CD4-positive, alpha-beta memory T cell (primary cell): ENCODE measurements at regions of chr3 and their contacts with region 1.

Region 1: DNA sequence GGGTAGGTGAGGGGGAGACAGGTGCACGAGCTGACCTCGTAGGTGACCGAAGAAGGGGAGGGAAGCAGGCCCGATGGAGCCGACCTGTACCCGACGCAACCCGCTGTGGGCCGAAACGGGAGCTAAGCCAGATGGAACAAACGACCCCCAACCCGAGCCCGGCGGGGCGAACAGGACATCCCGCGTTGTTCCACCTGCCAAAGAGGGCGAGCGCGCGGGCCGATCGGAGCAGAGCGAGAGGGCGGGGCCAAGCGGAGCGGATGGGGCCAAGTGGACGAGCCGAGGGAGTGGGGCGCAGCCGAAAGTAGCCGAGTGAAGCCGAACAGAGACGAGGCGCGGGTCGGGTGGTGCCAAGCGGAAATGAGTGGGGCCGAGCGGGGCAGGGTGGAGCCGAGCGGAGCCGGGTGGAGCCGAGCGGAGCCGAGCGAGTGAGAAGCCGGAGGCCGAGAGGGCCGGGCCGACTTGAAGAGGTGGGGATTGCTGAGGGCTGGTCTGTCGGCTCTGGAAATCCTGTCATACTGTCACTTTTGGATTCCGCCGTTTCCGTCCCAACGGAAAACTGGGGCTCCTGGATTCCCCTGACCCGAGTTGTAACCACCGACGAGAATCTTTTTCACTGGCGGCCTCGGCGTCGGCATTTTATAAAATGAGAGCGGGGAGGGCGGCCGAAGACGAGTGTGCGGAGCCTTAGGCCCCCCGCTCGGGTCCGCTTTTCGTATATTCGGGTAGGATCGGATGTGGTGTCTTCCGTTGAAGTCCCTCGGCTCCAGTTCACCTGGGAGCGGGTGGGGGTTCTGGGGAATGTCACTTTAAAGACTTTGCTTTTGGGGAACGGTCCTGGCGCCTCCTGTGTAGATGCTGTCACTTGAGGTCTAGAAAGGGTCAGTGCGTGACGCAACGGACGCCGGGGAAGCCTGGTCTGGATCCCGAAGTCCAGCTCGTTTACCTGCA is 15.6 kb upstream of the WNT7A start:
- DNase-seq: peak; percentile 93 to 95 (median 93)
- H3K4me3 ChIP-seq: peak overlapping the region; percentile 58 to 72
- H3K4me3 Mint-ChIP-seq: peak overlapping the region; percentile 78 to 94 (median 90)
- H3K27ac ChIP-seq: peak overlapping the region; percentile 73
- H3K27ac Mint-ChIP-seq: peak overlapping the region; percentile 64 to 96 (median 93)
- H3K4me1 ChIP-seq: peaks cover 40% of the 10 kb centered on the region
- H3K4me1 Mint-ChIP-seq: peaks cover 14 to 47% (median 28%) of the 10 kb centered on the region in 4 donors
- H3K27me3 ChIP-seq: no peaks in the 10 kb centered on the region
- H3K27me3 Mint-ChIP-seq: no peaks in the 10 kb centered on the region

Region 2: DNA sequence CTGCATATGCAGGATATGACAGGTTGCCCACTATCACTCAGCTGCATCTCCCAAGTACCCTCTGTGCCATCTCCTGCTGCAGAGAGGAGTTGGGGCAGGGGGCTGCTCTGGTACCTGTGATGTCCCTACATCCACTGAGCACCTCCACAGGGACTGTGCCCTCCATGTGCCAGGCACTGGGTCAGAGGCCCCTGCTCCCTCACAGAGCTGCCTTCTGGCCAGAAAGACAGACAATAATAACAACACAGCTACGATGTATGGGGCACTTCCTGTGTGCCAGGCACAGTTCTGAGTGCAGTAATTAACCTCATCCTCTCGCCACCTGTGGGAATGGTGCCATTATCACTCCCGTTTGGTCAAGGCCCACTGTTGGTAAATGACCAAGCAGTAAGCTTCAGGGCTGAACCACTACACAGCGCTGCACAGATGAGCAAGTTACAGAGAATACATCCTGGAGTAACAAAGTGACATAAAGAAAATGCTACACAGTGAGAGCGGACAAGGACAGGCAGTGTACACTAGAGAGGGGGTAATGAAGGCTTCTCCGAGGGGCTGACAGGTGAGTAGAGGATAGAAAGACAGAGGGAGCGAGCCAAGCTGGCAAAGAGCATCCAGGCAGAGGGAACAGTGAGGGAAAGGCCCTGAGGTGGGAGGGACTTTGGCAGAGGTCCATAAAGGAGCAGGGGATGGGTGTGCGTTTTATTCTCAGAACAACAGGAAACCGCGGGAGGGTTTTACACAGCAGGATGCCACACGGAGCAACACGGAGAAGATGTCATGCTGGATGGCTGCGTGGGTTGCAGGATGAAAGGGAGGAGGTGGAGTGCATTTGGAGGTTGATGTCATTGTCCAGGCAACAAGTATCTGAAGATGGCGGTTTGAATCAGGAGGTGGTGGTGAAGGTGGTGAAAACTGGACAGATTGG is 29.1 kb before region 1 on chr3:
- CTCF ChIA-PET with region 1: interaction called, 5 read pairs
- POLR2A ChIA-PET with region 1: interaction called, 34 read pairs
- intact Hi-C with region 1: no loop called
- DNase-seq: peak; percentile 80 to 87 (median 84)
- H3K4me3 ChIP-seq: peak overlapping the region in 1 of 2 donors; percentile 36
- H3K4me3 Mint-ChIP-seq: peak overlapping the region; percentile 72 to 84 (median 79)
- H3K27ac ChIP-seq: peak overlapping the region; percentile 64
- H3K27ac Mint-ChIP-seq: peak overlapping the region; percentile 83 to 100 (median 98)
- H3K4me1 ChIP-seq: peaks cover 72% of the 10 kb centered on the region
- H3K4me1 Mint-ChIP-seq: peaks cover 48 to 75% (median 63%) of the 10 kb centered on the region in 4 donors
- H3K27me3 ChIP-seq: no peaks in the 10 kb centered on the region
- H3K27me3 Mint-ChIP-seq: no peaks in the 10 kb centered on the region

Region 3: GRCh38 chr3:14144423-14145075 is 249.1 kb after region 1 on chr3:
- CTCF ChIA-PET with region 1: interaction called, 7 read pairs
- POLR2A ChIA-PET with region 1: interaction called, 11 read pairs
- intact Hi-C with region 1: loop called (anchors 5 kb)
- DNase-seq: peak; percentile 87 to 96 (median 93)
- H3K4me3 ChIP-seq: peak overlapping the region in 1 of 2 donors; percentile 29
- H3K4me3 Mint-ChIP-seq: peak overlapping the region; percentile 73 to 89 (median 82)
- H3K27ac ChIP-seq: peak overlapping the region; percentile 95
- H3K27ac Mint-ChIP-seq: peak overlapping the region; percentile 95 to 100 (median 100)
- H3K4me1 ChIP-seq: peaks cover 67% of the 10 kb centered on the region
- H3K4me1 Mint-ChIP-seq: peaks cover 45 to 72% (median 60%) of the 10 kb centered on the region in 4 donors
- H3K27me3 ChIP-seq: no peaks in the 10 kb centered on the region
- H3K27me3 Mint-ChIP-seq: no peaks in the 10 kb centered on the region

Region 4: GRCh38 chr3:14261229-14261628 is 365.8 kb after region 1 on chr3:
- CTCF ChIA-PET with region 1: interaction called, 10 read pairs
- POLR2A ChIA-PET with region 1: no interaction called
- intact Hi-C with region 1: loop called (anchors 1 kb)
- DNase-seq: peak; percentile 54 to 65 (median 64)
- H3K4me3 ChIP-seq: no peak overlapping the region
- H3K4me3 Mint-ChIP-seq: no peak overlapping the region
- H3K27ac ChIP-seq: no peak overlapping the region
- H3K27ac Mint-ChIP-seq: no peak overlapping the region
- H3K4me1 ChIP-seq: no peaks in the 10 kb centered on the region
- H3K4me1 Mint-ChIP-seq: peaks cover 0 to 2% (median under 1%) of the 10 kb centered on the region in 4 donors
- H3K27me3 ChIP-seq: no peaks in the 10 kb centered on the region
- H3K27me3 Mint-ChIP-seq: peaks cover 0 to 6% of the 10 kb centered on the region in 2 donors

Region 5: DNA sequence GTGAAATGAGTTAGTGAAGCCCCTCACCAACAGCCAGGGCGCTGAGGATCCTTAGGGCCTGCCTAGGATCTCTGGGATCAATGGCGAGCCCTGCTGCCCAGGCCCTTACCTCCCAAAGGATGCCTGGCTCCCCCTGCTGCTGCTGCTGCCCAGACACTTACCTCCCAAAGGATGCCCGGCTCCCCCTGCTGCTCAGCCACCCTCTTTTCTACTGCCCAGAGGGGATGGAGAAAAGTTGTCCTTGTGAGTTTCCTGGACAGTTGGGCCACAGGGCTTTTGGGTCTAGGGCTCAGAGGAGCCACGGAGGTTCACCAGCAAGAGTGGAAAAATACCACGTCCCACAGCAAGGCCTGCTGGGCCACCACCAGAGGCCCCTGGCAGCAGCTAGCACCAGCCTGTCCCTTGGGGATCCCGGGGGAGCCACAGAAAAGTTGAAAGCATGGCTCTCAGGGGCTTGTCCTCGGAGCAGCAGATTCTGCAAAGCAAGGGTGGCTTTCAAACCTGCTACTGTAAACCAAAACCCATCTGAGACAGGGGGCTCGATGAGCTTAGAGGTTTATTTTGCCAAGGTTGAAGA is 566.4 kb after region 1 on chr3:
- CTCF ChIA-PET with region 1: interaction called, 24 read pairs
- POLR2A ChIA-PET with region 1: interaction called, 3 read pairs
- intact Hi-C with region 1: loop called (anchors 1 kb)
- DNase-seq: peak in 4 of 5 donors; percentile 30 to 38 (median 32)
- H3K4me3 ChIP-seq: no peak overlapping the region
- H3K4me3 Mint-ChIP-seq: no peak overlapping the region
- H3K27ac ChIP-seq: no peak overlapping the region
- H3K27ac Mint-ChIP-seq: peak overlapping the region in 3 of 7 donors; percentile 23 to 73 (median 41)
- H3K4me1 ChIP-seq: no peaks in the 10 kb centered on the region
- H3K4me1 Mint-ChIP-seq: peaks cover 0 to 5% (median 3%) of the 10 kb centered on the region in 4 donors
- H3K27me3 ChIP-seq: no peaks in the 10 kb centered on the region
- H3K27me3 Mint-ChIP-seq: no peaks in the 10 kb centered on the region

Region 6: DNA sequence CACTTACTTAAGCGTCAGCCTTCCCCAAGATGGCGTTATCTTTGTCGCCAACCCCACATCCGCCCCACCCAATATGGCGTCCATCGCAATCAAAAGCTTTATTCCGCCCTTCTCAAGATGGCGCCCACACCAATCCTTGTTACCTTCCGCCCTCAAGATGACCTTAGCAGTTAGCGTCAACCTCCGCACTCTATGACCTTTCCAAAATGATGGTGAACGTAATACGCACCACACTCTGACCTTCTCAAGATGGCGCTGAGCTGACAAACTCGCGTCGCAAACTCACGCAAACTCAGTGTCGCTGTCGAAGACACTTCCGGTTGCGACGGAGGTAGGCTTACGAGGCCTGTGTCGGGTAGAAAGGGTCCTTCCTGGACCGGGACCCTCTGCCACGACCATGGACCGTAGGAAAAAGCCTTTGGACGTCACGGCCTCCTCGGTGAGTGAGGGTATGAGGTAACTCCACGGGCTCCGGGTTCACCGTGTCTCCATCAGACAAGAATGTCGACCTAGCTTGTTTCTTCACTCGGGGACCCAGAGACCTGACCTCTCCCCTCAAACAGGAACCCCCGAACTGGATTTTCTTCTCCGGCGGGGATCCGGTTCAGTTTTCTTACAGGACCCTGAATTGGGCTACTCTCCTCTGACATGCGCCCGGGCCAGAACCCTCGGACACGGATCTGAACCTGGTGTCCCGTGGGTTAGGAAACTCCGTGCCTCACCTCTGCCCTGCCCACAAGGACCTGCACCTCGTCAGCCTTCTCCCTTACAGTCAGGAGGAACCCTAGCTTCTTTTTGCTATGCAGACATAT is 756.2 kb after region 1 on chr3 and contains the start of gene CCDC174:
- CTCF ChIA-PET with region 1: no interaction called
- POLR2A ChIA-PET with region 1: interaction called, 7 read pairs
- intact Hi-C with region 1: loop called (anchors 1 kb)
- DNase-seq: peak; percentile 95 to 98 (median 97)
- H3K4me3 ChIP-seq: peak within 1 kb of the TSS; percentile 67 to 98
- H3K4me3 Mint-ChIP-seq: peak within 1 kb of the TSS; percentile 84 to 99 (median 94)
- H3K27ac ChIP-seq: peak within 1 kb of the TSS; percentile 98
- H3K27ac Mint-ChIP-seq: peak within 1 kb of the TSS; percentile 91 to 100 (median 98)
- H3K4me1 ChIP-seq: peaks cover 37% of the 10 kb centered on the region
- H3K4me1 Mint-ChIP-seq: peaks cover 27 to 50% (median 40%) of the 10 kb centered on the region in 4 donors
- H3K27me3 ChIP-seq: no peaks in the 10 kb centered on the region
- H3K27me3 Mint-ChIP-seq: no peaks in the 10 kb centered on the region
- total RNA-seq, gene CCDC174: 45.9 to 51.8 TPM